Caco-2 (cell line): ENCODE measurements at regions of chr22 and their contacts with region 1.

Region 1: GRCh38 chr22:50525390-50526068 is at the start of gene SCO2:
- DNase-seq: peak; percentile 96 to 97
- H3K4me3 ChIP-seq: peak within 1 kb of the TSS; percentile 87
- H3K4me3 Mint-ChIP-seq: peak within 1 kb of the TSS; percentile 89
- H3K27ac Mint-ChIP-seq: peak within 1 kb of the TSS; percentile 91
- H3K4me1 ChIP-seq: peaks cover 17% of the 10 kb centered on the region
- H3K4me1 Mint-ChIP-seq: peaks cover 14% of the 10 kb centered on the region
- H3K27me3 ChIP-seq: no peaks in the 10 kb centered on the region
- H3K27me3 Mint-ChIP-seq: no peaks in the 10 kb centered on the region
- CTCF ChIP-seq: peak; percentile 33 to 53
- total RNA-seq, gene SCO2: 3.0 and 6.5 TPM in 2 replicates

Region 2: DNA sequence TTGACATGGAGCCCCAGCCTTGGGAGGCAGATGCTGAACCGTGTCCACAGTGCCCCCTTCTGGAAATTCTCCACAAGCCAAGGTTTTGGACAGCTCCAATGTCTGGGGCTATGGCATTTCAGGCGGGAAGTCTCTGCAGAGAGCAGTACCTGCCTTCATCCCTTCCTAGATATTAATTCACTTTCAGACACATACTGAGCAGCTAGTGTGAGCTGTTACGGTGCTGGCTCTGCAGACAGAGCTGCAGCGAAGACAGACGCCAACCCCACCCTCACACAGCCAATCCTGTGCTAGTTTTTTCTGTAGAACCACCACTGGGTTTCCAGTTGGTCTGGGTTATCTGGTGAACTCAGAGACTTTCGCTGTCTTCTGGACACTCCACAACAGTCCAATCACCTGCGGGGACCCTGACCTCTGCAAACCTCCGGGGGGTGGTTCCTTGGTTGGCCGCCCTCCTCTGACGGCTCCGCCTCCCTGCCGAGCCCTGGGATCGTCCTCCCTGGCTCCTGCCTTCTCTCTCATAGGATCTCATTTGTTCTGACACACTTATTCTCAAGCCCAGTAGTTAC is 27.1 kb before region 1 on chr22:
- CTCF ChIA-PET with region 1: interaction called, 19 read pairs
- POLR2A ChIA-PET with region 1: interaction called, 5 read pairs
- intact Hi-C with region 1: no loop called
- DNase-seq: peak; percentile 86 to 88
- H3K4me3 ChIP-seq: peak overlapping the region; percentile 1; the same call in 1 of the 2 replicates
- H3K4me3 Mint-ChIP-seq: peak overlapping the region; percentile 53
- H3K27ac Mint-ChIP-seq: peak overlapping the region; percentile 63
- H3K4me1 ChIP-seq: peaks cover 6% of the 10 kb centered on the region; the same call in 1 of the 2 replicates
- H3K4me1 Mint-ChIP-seq: peaks cover 7% of the 10 kb centered on the region
- H3K27me3 ChIP-seq: no peaks in the 10 kb centered on the region
- H3K27me3 Mint-ChIP-seq: no peaks in the 10 kb centered on the region
- CTCF ChIP-seq: peak; percentile 40 to 62

Region 3: GRCh38 chr22:50507991-50508884 is 17.3 kb before region 1 on chr22 and contains the start of gene NCAPH2:
- CTCF ChIA-PET with region 1: interaction called, 32 read pairs
- POLR2A ChIA-PET with region 1: interaction called, 71 read pairs
- intact Hi-C with region 1: no loop called
- DNase-seq: peak; percentile 95 to 96
- H3K4me3 ChIP-seq: peak within 1 kb of the TSS; percentile 91
- H3K4me3 Mint-ChIP-seq: peak within 1 kb of the TSS; percentile 93
- H3K27ac Mint-ChIP-seq: peak within 1 kb of the TSS; percentile 90
- H3K4me1 ChIP-seq: peaks cover 5% of the 10 kb centered on the region; the same call in 1 of the 2 replicates
- H3K4me1 Mint-ChIP-seq: peaks cover 11% of the 10 kb centered on the region
- H3K27me3 ChIP-seq: no peaks in the 10 kb centered on the region
- H3K27me3 Mint-ChIP-seq: no peaks in the 10 kb centered on the region
- CTCF ChIP-seq: no peak
- total RNA-seq, gene NCAPH2: 84.3 and 88.9 TPM in 2 replicates

Region 4: DNA sequence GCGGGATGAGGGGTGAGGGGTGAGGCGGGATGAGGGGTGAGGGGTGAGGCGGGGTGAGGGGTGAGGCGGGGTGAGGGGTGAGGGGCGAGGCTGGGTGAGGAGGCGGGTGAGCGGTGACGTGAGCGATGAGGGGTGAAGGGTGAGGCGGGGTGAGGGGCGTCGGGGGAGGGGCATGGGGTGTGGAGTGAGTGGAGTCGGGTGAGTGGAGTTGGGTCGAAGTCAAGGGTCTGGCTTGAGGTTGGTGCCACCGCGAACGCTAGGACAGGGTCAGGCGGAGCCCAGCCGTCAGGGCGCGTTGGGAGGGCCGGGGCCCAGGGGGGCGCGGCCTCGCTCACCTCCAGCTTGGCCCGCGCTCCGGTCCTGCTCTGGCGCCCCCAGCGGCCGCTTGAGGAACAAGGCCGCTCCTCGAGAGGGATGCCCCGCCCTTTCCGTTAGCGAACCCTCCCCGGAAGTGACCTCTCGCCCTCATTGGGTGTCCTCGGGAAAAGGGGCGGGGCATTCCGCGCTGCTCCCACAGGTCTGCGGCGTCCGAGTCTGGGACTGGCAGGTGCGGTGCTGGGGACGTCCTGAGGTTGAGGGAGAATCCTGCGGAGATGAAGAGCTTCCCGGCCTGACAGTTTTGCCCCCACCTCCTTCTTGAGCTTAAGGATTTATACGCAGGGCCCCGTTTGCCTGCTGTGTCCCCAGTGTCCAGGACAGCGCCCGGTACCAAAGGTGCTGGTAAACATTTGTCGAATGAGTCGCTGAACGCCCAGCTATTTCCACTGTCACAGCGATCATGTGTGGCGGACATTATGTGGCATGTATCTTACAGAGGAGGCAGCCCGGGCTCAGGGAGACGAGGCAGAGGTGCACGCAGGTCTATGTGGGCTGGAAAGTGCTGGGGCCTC is 37.2 kb after region 1 on chr22 and contains the start of gene SYCE3:
- CTCF ChIA-PET with region 1: interaction called, 43 read pairs
- POLR2A ChIA-PET with region 1: interaction called, 12 read pairs
- intact Hi-C with region 1: no loop called
- DNase-seq: peak; percentile 97 to 99
- H3K4me3 ChIP-seq: peak within 1 kb of the TSS; percentile 63
- H3K4me3 Mint-ChIP-seq: peak within 1 kb of the TSS; percentile 86
- H3K27ac Mint-ChIP-seq: peak within 1 kb of the TSS; percentile 87
- H3K4me1 ChIP-seq: no peaks in the 10 kb centered on the region
- H3K4me1 Mint-ChIP-seq: peaks cover 14% of the 10 kb centered on the region
- H3K27me3 ChIP-seq: no peaks in the 10 kb centered on the region
- H3K27me3 Mint-ChIP-seq: no peaks in the 10 kb centered on the region
- CTCF ChIP-seq: peak; percentile 85 to 87
- total RNA-seq, gene SYCE3: not detected in 2 replicates

Region 5: GRCh38 chr22:50582562-50583293 is 57.2 kb after region 1 on chr22 and contains the start of gene CHKB:
- CTCF ChIA-PET with region 1: interaction called, 7 read pairs
- POLR2A ChIA-PET with region 1: interaction called, 3 read pairs
- intact Hi-C with region 1: loop called (anchors 5 kb)
- DNase-seq: peak; percentile 97 to 99
- H3K4me3 ChIP-seq: peak within 1 kb of the TSS; percentile 69
- H3K4me3 Mint-ChIP-seq: peak within 1 kb of the TSS; percentile 78
- H3K27ac Mint-ChIP-seq: peak within 1 kb of the TSS; percentile 97
- H3K4me1 ChIP-seq: peaks cover 23% of the 10 kb centered on the region
- H3K4me1 Mint-ChIP-seq: no peaks in the 10 kb centered on the region
- H3K27me3 ChIP-seq: no peaks in the 10 kb centered on the region
- H3K27me3 Mint-ChIP-seq: no peaks in the 10 kb centered on the region
- CTCF ChIP-seq: no peak
- total RNA-seq, gene CHKB: 43.3 and 45.4 TPM in 2 replicates

Region 6: GRCh38 chr22:50620593-50621355 is 95.2 kb after region 1 on chr22:
- CTCF ChIA-PET with region 1: interaction called, 23 read pairs
- POLR2A ChIA-PET with region 1: no interaction called
- intact Hi-C with region 1: loop called (anchors 5 kb)
- DNase-seq: peak in 1 of 2 experiments; percentile 81
- H3K4me3 ChIP-seq: peak overlapping the region; percentile 39
- H3K4me3 Mint-ChIP-seq: peak overlapping the region; percentile 82
- H3K27ac Mint-ChIP-seq: no peak overlapping the region
- H3K4me1 ChIP-seq: peaks cover 18% of the 10 kb centered on the region
- H3K4me1 Mint-ChIP-seq: peaks cover 13% of the 10 kb centered on the region
- H3K27me3 ChIP-seq: no peaks in the 10 kb centered on the region
- H3K27me3 Mint-ChIP-seq: no peaks in the 10 kb centered on the region
- CTCF ChIP-seq: peak; percentile 63 to 86